PC-9 (cell line): ENCODE measurements at regions of chr20 and their contacts with region 1.

Region 1: GRCh38 chr20:35092524-35093266 is at the start of gene TRPC4AP:
- DNase-seq: peak; percentile 82 to 93
- H3K4me3 ChIP-seq: peak within 1 kb of the TSS; percentile 92
- H3K27ac ChIP-seq: peak within 1 kb of the TSS; percentile 98
- H3K4me1 ChIP-seq: peaks cover 36% of the 10 kb centered on the region
- H3K27me3 ChIP-seq: no peaks in the 10 kb centered on the region
- CTCF ChIP-seq: peak; percentile 94
- total RNA-seq, gene TRPC4AP: 51.0 and 51.9 TPM in 2 replicates

Region 2: DNA sequence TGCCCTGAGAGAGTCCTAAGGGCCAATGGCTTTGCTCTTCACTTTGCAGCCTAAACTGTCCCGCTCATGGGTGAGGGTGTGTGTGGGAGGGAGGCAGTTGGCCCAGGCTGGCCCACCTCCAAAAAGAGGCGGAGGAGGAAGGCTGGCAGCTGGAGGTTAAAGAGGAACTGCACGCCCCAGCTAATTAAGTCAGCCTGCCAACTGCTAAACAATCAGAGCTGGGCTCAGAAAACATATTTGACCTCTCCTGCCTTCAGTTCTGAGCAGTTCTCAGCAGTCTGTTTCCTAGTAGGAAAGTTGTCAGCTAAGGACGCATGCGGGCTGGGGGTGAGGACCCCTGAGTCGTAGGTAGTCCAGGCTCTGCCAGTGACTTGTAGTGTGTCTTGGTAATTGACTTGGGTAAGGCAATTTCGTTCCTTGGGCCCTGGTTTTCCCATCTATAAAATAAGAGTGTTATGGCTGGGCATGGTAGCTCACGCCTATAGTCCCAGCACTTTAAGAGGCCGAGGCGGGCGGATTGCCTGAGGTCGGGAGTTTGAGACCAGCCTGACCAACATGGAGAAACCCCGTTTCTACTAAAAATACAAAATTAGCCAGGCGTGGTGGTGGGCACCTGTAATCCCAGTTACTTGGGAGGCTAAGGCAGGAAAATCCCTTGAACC is 154.1 kb before region 1 on chr20:
- CTCF ChIA-PET with region 1: no interaction called
- POLR2A ChIA-PET with region 1: no interaction called
- intact Hi-C with region 1: no loop called
- DNase-seq: no peak
- H3K4me3 ChIP-seq: no peak overlapping the region
- H3K27ac ChIP-seq: no peak overlapping the region
- H3K4me1 ChIP-seq: peaks cover 11% of the 10 kb centered on the region
- H3K27me3 ChIP-seq: no peaks in the 10 kb centered on the region
- CTCF ChIP-seq: no peak

Region 3: GRCh38 chr20:35079472-35080347 is 13.0 kb before region 1 on chr20:
- CTCF ChIA-PET with region 1: interaction called, 15 read pairs
- POLR2A ChIA-PET with region 1: no interaction called
- intact Hi-C with region 1: no loop called
- DNase-seq: no peak
- H3K4me3 ChIP-seq: no peak overlapping the region
- H3K27ac ChIP-seq: no peak overlapping the region
- H3K4me1 ChIP-seq: no peaks in the 10 kb centered on the region
- H3K27me3 ChIP-seq: no peaks in the 10 kb centered on the region
- CTCF ChIP-seq: no peak

Region 4: DNA sequence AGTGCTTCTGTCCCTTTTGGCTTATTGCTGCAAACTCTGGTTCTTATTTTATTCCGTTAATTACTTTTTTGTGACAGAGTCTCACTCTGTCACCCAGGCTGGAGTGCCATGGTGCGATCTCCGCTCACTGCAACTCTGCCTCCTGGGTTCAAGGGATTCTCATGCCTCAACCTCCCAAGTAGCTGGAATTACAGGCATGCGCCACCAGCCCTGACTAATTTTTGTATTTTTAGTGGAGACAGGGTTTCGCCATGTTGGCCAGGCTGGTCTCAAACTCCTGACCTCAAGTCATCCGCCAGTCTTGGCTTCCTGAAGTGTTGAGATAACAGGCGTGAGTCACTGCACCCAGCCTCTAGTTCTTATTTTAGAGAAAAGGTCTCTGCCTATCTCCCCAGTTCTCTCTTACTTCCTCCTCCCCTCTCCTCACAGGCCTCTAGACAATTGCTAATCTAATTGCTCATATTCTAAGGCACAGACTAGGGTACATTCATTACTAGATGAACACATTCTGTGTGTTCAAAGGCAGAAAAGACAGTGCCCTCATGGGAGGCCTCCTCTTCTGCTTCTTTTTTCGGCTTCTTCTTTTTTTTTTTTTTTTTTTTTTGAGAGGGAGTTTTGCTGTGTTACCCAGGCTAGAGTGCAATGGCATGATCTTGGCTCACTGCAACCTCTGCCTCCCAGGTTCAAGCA is 27.5 kb after region 1 on chr20:
- CTCF ChIA-PET with region 1: interaction called, 21 read pairs
- POLR2A ChIA-PET with region 1: no interaction called
- intact Hi-C with region 1: no loop called
- DNase-seq: peak in 1 of 2 experiments; percentile 66
- H3K4me3 ChIP-seq: no peak overlapping the region
- H3K27ac ChIP-seq: no peak overlapping the region
- H3K4me1 ChIP-seq: 0 out of 2 replicates have a peak, but pooled peaks cover 8% of the 10 kb centered on the region
- H3K27me3 ChIP-seq: no peaks in the 10 kb centered on the region
- CTCF ChIP-seq: no peak

Region 5: DNA sequence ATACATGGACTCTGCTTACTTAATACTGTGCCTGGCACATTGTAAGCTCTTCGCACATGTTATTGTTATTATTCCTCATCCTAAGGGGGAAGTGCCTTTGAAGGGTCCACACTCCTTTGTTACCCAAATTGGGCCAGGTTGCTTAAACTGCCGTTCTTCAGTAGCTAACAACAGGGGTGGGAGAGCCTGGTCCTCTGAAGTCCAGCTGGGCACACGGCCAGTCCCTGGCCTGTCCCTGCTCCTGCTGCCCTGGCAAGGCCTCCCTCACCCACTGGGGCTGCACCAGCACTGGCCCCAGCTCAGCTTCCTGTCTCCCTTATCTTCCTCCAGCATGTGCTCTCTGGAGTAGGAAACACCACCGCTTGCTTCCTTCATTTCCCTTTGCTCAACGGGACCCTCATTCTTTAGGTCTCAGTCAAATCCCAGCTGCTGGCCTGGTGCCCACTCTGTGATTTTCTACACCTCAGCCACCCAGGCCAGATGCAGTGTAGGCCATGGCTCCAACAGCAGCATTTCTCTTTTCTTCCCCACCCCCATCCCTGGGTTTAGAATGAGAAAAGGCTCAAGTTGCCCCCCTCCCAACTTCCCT is 73.6 kb after region 1 on chr20:
- CTCF ChIA-PET with region 1: interaction called, 22 read pairs
- POLR2A ChIA-PET with region 1: no interaction called
- intact Hi-C with region 1: no loop called
- DNase-seq: no peak
- H3K4me3 ChIP-seq: no peak overlapping the region
- H3K27ac ChIP-seq: no peak overlapping the region
- H3K4me1 ChIP-seq: peaks cover 6% of the 10 kb centered on the region
- H3K27me3 ChIP-seq: no peaks in the 10 kb centered on the region
- CTCF ChIP-seq: no peak

Region 6: DNA sequence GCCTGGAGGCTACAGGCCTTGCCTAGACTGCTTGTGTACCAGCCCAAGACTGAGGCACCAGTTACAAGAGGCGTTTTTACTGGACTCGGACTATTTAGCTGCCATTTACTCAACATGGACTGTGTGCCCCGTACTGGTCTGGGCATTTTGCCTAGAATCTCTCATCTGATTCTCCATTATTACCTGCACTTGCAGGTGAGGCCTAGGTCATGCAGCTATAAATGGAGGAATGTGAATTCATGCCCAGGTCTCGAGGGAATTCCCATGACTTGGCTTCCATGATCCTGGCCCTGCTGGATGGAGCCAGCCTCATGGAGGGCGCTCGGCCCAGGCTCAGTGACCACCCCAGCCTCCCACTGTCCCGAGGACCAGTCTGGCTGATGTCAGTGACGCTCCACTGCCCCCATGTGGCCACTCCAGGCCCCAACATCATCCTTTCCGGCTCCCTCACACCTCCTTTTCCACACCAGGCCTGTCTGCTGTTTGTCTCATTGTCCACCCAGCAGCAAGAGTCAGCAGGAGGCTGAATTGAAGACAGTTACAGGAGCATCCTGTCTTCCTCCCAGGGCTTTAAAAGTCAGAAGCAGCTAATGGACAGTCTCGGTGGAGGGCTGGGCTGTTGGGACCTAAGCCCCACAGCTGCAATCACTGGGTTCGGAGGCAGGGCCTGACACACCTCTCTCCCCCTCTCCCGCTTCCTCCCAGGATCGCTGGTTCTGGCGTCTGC is 176.5 kb after region 1 on chr20:
- CTCF ChIA-PET with region 1: interaction called, 5 read pairs
- POLR2A ChIA-PET with region 1: no interaction called
- intact Hi-C with region 1: loop called (anchors 2 kb)
- DNase-seq: peak in 1 of 2 experiments; percentile 66
- H3K4me3 ChIP-seq: no peak overlapping the region
- H3K27ac ChIP-seq: no peak overlapping the region
- H3K4me1 ChIP-seq: peaks cover under 1% of the 10 kb centered on the region
- H3K27me3 ChIP-seq: no peaks in the 10 kb centered on the region
- CTCF ChIP-seq: peak; percentile 84

Region 7: DNA sequence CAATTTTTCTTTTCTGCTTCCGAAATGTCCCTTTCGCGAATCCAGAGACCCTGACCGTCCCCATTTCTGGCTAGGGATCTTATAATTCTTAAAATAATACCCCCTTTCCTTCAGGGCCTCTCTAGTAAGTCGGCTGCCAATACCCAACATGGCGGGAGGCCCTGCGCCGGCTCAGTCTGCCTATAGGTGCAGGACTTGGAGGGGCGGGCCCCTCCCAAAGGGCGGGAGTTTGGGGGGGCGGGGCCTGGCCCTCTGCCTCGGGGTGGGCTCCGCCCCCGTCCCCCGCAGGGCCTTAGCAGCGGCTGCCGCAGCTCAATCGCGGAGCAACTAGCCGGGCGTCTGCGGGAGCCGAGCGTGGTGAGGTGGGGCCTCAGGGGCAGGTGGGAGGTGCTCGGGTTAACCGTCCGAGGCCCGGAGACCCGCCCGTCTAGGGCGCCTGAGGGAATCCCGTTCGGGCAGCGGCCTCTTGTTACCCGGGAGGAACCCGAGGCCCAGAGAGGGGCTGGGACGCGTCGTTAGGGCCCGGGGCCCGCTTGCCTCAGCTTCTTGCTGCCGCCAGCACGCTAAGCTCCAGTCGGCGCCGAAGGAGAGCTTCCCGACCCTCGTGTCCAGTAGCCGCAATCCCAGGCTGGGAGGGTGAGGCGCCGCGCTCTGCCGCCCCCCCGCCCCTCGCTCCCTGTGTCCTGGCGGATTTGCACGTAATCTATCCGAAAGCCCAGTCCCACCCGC is 362.4 kb after region 1 on chr20 and contains the start of gene CEP250:
- CTCF ChIA-PET with region 1: no interaction called
- POLR2A ChIA-PET with region 1: no interaction called
- intact Hi-C with region 1: loop called (anchors 10 kb)
- DNase-seq: peak; percentile 87 to 98
- H3K4me3 ChIP-seq: peak within 1 kb of the TSS; percentile 78
- H3K27ac ChIP-seq: peak within 1 kb of the TSS; percentile 88
- H3K4me1 ChIP-seq: peaks cover 22% of the 10 kb centered on the region
- H3K27me3 ChIP-seq: no peaks in the 10 kb centered on the region
- CTCF ChIP-seq: no peak
- total RNA-seq, gene CEP250: 63.6 and 79.5 TPM in 2 replicates